Activated CD8-positive, alpha-beta T cell treated with anti-CD3 and anti-CD28 coated beads for 36 hours (primary cell): ENCODE measurements at regions of chr21 and their contacts with region 1.

Region 1: DNA sequence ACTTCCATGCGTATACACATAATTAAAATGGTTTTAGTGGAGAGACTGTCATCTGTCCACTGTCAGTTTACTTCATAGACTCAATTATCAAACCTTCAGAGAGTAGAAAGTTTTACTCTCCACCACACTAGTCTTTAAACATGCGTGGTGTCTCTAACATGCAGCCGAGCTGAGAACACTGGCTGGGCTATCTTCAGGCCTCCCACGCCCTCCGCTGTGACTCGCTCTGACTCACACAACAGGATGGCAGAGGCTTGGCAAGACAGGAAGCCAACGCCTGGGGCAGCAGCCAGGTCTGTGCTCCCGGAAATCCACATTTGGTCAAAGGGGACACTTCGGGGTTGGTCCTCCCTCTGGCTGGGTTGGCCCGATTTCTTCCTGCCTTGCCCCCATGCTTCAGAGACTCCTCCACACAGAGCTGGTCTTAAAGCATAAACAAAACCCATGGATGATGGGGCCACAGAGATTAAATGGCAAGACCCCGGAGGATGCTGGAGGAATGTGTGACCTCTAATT is 22.7 kb upstream of the IFNGR2 start:
- DNase-seq: peak; percentile 99
- ATAC-seq: peak; percentile 77
- H3K4me3 Mint-ChIP-seq: peak overlapping the region; percentile 39
- H3K27ac Mint-ChIP-seq: peak overlapping the region; percentile 79
- H3K4me1 Mint-ChIP-seq: peaks cover 61% of the 10 kb centered on the region
- H3K27me3 Mint-ChIP-seq: peaks cover 2% of the 10 kb centered on the region
- CTCF ChIP-seq: no peak

Region 2: DNA sequence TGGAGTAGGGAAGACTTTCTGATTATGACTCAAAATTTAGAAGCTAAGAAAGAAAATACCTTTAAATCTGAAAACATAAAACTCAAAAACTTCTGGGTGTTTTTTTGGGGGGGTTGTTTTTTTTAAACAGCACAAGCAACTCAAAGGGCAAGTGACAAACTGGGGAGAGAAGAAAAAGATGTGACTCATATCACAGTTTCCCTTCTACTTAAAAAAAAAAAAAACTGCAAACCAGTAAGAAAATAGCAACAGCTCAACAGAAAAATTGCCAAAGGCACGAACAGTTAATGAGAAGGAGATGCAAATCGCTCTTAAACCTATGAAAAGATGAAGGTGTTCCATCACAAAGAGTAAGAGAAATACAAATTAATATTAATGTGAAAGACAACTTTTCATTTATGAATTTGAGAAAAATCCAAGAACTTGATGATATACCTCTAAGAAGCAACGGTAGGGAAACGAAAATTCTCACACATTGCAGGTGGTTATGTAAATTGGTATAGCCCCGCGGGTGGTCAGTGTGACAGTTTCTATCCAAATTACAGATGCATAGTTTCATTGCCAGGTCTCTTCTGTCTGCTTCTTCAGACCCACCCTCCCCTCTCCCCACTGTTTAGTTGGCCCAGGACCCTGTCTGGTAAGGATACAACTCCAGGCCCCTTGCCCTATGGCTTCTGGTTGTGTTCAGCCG is 141.8 kb before region 1 on chr21:
- CTCF ChIA-PET with region 1: no interaction called
- POLR2A ChIA-PET with region 1: no interaction called
- intact Hi-C with region 1: loop called (anchors 5 kb)
- DNase-seq: peak; percentile 63
- ATAC-seq: peak; percentile 61
- H3K4me3 Mint-ChIP-seq: peak overlapping the region; percentile 24
- H3K27ac Mint-ChIP-seq: peak overlapping the region; percentile 92
- H3K4me1 Mint-ChIP-seq: peaks cover 79% of the 10 kb centered on the region
- H3K27me3 Mint-ChIP-seq: no peaks in the 10 kb centered on the region
- CTCF ChIP-seq: no peak

Region 3: GRCh38 chr21:33324291-33325221 is 56.0 kb before region 1 on chr21 and contains the start of gene IFNAR1:
- CTCF ChIA-PET with region 1: interaction called, 4 read pairs
- POLR2A ChIA-PET with region 1: no interaction called
- intact Hi-C with region 1: loop called (anchors 5 kb)
- DNase-seq: peak; percentile 100
- ATAC-seq: peak; percentile 93
- H3K4me3 Mint-ChIP-seq: no peak within 1 kb of the TSS
- H3K27ac Mint-ChIP-seq: no peak within 1 kb of the TSS
- H3K4me1 Mint-ChIP-seq: peaks cover 27% of the 10 kb centered on the region
- H3K27me3 Mint-ChIP-seq: no peaks in the 10 kb centered on the region
- CTCF ChIP-seq: no peak
- total RNA-seq, gene IFNAR1: 25.6 to 30.3 TPM

Region 4: DNA sequence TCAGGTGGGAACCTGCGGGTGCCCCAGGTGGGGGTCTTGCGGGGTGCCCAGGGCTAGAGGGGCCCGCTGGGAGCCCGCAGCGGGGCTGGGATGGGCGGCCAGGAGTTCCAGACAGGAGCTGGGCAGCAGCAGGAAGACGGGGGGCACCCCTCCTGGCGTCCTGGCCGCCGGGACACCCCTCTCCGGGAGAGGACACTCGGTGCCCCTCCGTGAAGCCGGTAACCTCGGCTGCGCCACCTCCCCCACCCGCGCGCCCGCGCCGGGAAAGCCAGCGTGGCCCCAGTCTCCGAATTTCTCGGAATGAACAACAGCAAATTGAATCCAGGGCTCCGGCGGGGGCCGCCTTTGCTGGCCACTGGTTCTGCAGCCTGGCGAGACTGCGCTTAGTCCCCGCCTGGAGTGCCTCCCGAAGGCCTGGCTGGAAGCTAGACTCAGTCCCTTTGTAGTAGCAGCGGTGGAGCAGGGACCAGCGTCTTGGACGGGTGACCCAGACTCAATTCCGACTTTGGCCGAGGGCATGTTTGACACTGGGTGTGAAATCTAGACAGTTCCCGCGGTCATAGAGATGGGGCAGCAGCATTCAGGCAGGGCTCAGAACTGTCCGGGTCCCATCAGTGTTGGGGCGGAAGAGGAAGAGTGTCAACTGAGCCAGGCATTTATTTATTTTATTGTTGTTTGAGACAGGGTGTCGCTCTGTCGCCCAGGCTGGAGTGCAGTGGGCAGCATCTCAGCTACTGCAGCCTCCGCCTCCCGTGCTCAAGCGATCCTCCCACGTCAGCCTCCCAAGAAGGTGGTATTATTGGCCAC is 23.4 kb after region 1 on chr21:
- CTCF ChIA-PET with region 1: interaction called, 7 read pairs
- POLR2A ChIA-PET with region 1: interaction called, 10 read pairs
- intact Hi-C with region 1: no loop called
- DNase-seq: peak; percentile 32
- ATAC-seq: peak; percentile 33
- H3K4me3 Mint-ChIP-seq: peak overlapping the region; percentile 78
- H3K27ac Mint-ChIP-seq: peak overlapping the region; percentile 82
- H3K4me1 Mint-ChIP-seq: peaks cover 34% of the 10 kb centered on the region
- H3K27me3 Mint-ChIP-seq: peaks cover 11% of the 10 kb centered on the region
- CTCF ChIP-seq: no peak